AG04450 (cell line): ENCODE measurements at regions of chr5 and their contacts with region 1.

Region 1: GRCh38 chr5:134511788-134512650 is 13.5 kb upstream of the JADE2 start:
- DNase-seq: no peak
- H3K4me3 ChIP-seq: no peak overlapping the region
- H3K27ac ChIP-seq: peak overlapping the region; percentile 75
- H3K27me3 ChIP-seq: no peaks in the 10 kb centered on the region
- CTCF ChIP-seq: peak; percentile 15; the same call in 1 of the 2 replicates

Region 2: DNA sequence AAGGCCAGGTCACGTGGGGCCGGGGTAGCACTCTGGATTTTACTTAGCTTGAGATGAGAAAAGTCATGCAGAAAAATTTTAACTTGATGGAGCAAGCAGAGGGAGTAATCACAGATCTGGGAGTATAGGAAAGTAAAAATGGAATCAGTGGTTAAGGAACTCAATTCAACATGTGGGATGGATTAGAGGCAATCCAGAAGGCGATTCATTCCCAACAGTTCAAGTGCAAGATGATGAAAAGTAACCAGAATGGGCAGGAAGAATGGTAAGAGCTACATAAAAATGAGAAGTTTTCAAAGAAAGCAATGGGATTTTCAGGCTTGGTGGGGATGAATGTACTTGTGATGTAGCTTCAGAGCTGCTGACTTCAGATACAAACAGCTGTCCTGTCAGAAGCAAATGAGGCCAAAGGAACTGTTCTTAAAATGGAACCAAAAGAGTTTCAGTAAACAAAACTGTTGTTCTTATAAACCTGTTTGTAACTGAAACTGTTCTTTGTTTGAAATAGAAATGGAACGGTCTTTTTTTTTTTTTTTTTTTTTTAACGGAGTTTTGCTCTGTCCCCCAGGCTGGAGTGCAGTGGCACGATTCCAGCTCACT is 131.0 kb after region 1 on chr5:
- CTCF ChIA-PET with region 1: no interaction called
- POLR2A ChIA-PET with region 1: interaction called, 10 read pairs
- DNase-seq: no peak
- H3K4me3 ChIP-seq: no peak overlapping the region
- H3K27ac ChIP-seq: no peak overlapping the region
- H3K27me3 ChIP-seq: no peaks in the 10 kb centered on the region
- CTCF ChIP-seq: no peak